CD4-positive, alpha-beta memory T cell (primary cell): ENCODE measurements at regions of chr5 and their contacts with region 1.

Region 1: GRCh38 chr5:132746954-132747615 is at the start of gene CCNI2:
- DNase-seq: peak; percentile 71 to 76 (median 73)
- H3K4me3 ChIP-seq: peak within 1 kb of the TSS in 1 of 2 donors; percentile 58
- H3K4me3 Mint-ChIP-seq: peak within 1 kb of the TSS; percentile 78 to 87 (median 85)
- H3K27ac ChIP-seq: peak within 1 kb of the TSS; percentile 61
- H3K27ac Mint-ChIP-seq: peak within 1 kb of the TSS; percentile 74 to 89 (median 79)
- H3K4me1 ChIP-seq: peaks cover 7% of the 10 kb centered on the region
- H3K4me1 Mint-ChIP-seq: peaks cover 8 to 28% (median 15%) of the 10 kb centered on the region in 4 donors
- H3K27me3 ChIP-seq: no peaks in the 10 kb centered on the region
- H3K27me3 Mint-ChIP-seq: no peaks in the 10 kb centered on the region
- total RNA-seq, gene CCNI2: 12.5 to 13.0 TPM

Region 2: GRCh38 chr5:132759114-132760048 is 12.3 kb after region 1 on chr5:
- CTCF ChIA-PET with region 1: interaction called, 7 read pairs
- POLR2A ChIA-PET with region 1: interaction called, 12 read pairs
- intact Hi-C with region 1: no loop called
- DNase-seq: no peak
- H3K4me3 ChIP-seq: no peak overlapping the region
- H3K4me3 Mint-ChIP-seq: no peak overlapping the region
- H3K27ac ChIP-seq: no peak overlapping the region
- H3K27ac Mint-ChIP-seq: peak overlapping the region in 1 of 7 donors; percentile 48
- H3K4me1 ChIP-seq: no peaks in the 10 kb centered on the region
- H3K4me1 Mint-ChIP-seq: peaks cover 0 to 4% (median under 1%) of the 10 kb centered on the region in 4 donors
- H3K27me3 ChIP-seq: no peaks in the 10 kb centered on the region
- H3K27me3 Mint-ChIP-seq: no peaks in the 10 kb centered on the region

Region 3: GRCh38 chr5:132777209-132778069 is 30.4 kb after region 1 on chr5 and contains the start of gene SEPTIN8:
- CTCF ChIA-PET with region 1: interaction called, 3 read pairs
- POLR2A ChIA-PET with region 1: interaction called, 23 read pairs
- intact Hi-C with region 1: loop called (anchors 2 kb)
- DNase-seq: peak in 4 of 5 donors; percentile 38 to 51 (median 50)
- H3K4me3 ChIP-seq: peak within 1 kb of the TSS; percentile 69 to 70
- H3K4me3 Mint-ChIP-seq: peak within 1 kb of the TSS; percentile 78 to 89 (median 85)
- H3K27ac ChIP-seq: peak within 1 kb of the TSS; percentile 20
- H3K27ac Mint-ChIP-seq: peak within 1 kb of the TSS in 6 of 7 donors; percentile 33 to 89 (median 82)
- H3K4me1 ChIP-seq: peaks cover 35% of the 10 kb centered on the region
- H3K4me1 Mint-ChIP-seq: peaks cover 20 to 44% (median 28%) of the 10 kb centered on the region in 4 donors
- H3K27me3 ChIP-seq: no peaks in the 10 kb centered on the region
- H3K27me3 Mint-ChIP-seq: peaks cover 0 to 1% of the 10 kb centered on the region in 2 donors
- total RNA-seq, gene SEPTIN8: 12.6 to 13.8 TPM